ENCODE measurements at regions of chr7 and their contacts with region 1.

Region 1: DNA sequence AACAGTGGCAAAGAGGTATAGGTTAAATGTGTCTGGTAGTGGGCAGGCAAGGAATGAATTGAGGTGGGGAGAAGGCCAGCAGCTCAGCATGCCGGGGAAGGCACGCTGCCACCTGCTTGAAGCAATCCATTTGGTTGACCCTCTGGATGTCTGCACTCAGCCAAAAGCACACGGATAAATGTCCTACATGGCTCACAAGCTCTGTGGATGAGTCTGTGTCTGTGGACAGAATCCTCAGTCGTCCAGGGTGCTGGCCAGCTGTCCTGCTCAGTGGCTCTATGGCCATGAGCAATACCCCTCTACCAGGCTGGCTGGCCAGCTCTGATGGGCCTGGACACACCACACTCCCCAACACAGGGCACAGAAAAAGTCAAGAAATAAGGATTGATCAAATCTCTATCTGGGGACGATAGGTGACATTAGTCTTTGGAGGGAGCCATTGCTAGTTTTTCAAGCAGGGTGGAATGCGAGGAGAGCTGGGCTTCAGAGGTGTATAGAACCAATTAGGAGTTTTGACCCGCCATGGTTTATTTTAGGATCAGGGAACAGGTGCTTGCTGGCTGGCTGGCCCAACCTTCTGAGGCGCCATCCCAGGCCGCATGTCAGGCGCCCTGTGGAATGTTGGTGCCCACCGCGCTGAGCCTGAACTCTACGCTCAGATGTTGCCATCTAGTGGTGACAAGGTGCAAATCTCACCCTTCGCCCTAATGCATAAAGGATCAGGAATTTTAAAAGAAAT is 493.4 kb downstream of the TNS3 start:
- DNase-seq: peak; percentile 77
- ATAC-seq: peak; percentile 81

Region 2: DNA sequence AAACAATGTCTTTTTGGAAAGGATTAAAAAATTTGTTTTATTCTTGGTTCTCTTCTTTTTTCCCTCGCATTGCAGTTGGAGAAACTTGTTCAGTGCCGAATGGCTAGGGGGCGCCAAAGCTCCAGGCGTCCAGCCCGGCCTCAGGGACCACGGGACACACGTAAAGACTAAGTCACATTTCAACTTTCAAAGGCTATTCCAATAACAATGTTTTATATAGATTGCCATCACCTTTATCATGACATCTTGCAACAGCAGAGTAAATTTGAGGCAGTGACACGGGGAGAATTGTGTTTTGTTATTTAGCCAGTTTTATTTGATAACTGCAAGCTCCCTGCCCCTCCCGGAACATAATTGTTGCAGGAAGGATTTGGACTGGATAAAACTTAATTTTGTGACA is 1165.2 kb before region 1 on chr7:
- intact Hi-C with region 1: loop called (anchors 2 kb)
- DNase-seq: peak; percentile 78
- ATAC-seq: peak; percentile 35

Region 3: DNA sequence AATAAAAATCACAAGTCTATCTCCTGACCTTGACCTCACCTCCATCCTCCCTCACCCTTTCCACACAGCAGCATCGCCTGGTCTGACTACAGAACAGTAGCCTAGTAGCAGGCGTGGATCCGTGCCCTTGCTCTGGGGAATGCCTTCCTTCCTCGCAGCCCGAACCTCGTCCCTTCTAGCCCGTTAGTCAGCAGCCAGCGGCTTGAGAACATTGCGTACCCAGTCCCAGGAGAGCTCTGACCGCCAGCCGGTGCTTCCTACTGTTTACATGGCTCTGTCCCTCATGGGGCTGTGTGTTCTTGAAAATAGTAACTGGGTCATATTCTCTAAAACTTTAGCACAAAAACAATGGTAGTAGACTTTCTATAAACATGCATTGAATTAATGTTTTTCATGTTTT is 484.7 kb before region 1 on chr7:
- intact Hi-C with region 1: loop called (anchors 10 kb)
- DNase-seq: peak; percentile 94
- ATAC-seq: peak; percentile 92

Region 4: GRCh38 chr7:46776790-46777189 is 311.7 kb before region 1 on chr7:
- intact Hi-C with region 1: loop called (anchors 2 kb)
- DNase-seq: no peak
- ATAC-seq: no peak

Region 5: DNA sequence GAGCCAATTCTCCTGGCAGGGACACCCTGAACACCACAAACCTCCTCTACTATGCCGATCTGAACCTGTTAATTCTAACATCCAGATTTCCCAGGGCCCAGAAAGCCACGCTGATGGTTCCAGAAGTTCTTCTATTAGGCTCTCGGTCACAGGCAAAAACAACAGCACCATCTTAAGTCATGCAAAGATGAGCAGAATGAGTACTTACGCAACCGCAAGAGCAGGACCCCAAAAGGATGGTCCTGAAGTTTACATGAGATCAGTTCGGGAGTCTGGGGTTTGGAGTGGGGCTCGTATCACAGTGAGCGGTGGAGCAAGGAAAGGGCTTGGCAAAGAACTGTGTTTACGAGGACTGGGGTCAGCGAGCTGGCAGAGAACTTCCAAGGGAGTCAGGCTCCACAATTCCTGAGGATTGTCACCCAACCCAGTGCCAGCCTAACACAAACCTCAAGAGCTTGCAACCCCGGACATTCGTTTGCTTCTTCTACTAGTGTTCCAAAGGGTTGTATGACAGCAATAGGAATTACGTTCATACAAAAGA is 39.2 kb before region 1 on chr7:
- intact Hi-C with region 1: no loop called
- DNase-seq: no peak
- ATAC-seq: no peak

Region 6: DNA sequence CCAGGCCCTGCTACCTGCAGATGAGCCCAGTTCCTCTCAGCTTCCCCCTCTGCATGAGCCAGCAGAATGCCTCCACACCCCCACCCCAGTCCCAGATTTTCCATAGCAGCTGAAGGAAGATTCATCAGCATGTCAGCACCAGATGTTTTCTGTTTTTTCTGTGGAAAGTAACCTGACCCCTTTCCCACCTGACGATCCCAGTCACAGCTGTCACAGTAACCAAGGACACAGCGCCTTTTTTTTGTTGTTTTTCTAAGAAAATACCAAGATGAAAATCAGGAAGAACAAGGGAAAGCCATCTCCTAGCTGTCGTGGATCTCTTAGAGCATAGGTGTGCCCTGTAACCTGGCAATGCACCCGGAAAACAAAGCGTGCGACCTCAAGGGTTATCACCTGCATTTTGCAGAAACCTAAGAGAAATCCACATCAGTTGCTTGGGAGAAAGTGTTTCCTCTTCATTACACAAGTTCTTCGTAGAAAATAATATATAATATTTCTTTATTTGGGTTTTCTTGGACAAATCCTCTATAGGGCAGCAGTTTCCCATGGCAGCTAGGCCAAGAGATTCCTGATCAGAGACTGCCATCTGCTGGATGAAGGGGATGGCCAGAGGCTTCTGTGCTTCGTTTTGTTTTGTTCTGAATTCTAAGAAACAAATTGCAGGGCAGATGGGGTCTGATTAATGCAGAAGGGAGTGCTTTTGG is 91.5 kb after region 1 on chr7:
- intact Hi-C with region 1: loop called (anchors 10 kb)
- DNase-seq: no peak
- ATAC-seq: no peak